Activated CD4-positive, alpha-beta T cell treated with anti-CD3 and anti-CD28 coated beads for 36 hours (primary cell): ENCODE measurements at regions of chr2 and their contacts with region 1.

Region 1: DNA sequence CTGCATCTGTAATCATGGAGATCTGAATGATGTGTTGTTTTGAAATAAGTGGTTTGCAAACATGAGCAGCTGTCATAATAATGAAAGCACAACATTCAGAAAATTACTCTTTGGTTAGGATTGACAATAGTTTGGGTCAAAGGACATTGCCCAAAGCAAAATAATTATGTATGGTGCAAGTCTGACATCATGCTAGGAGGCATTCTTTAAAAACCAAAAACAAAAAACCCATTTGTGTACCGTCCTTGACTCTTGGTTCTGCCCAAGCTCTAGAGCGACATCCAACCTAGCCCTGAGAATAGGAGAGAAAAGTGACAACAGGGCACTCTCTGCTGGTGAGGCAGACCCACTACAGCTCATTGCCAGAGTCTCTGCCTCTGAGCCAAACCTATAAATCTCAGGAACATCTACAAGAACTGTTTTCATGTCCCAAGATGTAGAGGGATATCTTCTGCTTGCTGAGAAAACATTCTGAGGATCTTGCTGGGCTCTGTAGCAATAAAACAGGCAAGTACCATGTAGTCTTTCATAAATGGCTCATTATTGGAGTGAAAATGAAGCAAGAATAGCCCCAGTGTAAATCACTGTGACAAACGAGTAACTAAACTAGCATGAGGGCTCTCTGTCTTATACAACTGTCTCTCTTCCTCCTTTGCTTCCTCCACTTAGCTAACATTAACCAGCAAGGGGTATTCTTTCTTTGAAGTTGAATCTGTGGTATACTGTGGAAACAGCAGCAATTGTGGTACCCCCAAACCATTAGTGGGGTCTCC is 266.8 kb upstream of the CXCR4 start:
- DNase-seq: peak; percentile 68
- ATAC-seq: peak; percentile 40
- H3K4me3 Mint-ChIP-seq: no peak overlapping the region
- H3K27ac Mint-ChIP-seq: peak overlapping the region; percentile 67
- H3K4me1 Mint-ChIP-seq: peaks cover 42% of the 10 kb centered on the region
- H3K27me3 Mint-ChIP-seq: no peaks in the 10 kb centered on the region

Region 2: GRCh38 chr2:135052042-135052876 is 1332.5 kb before region 1 on chr2 and contains the start of gene RAB3GAP1:
- CTCF ChIA-PET with region 1: no interaction called
- POLR2A ChIA-PET with region 1: no interaction called
- intact Hi-C with region 1: loop called in 1 of 2 experiments (anchors 2 kb)
- DNase-seq: peak; percentile 96
- ATAC-seq: peak; percentile 79
- H3K4me3 Mint-ChIP-seq: peak within 1 kb of the TSS; percentile 92
- H3K27ac Mint-ChIP-seq: peak within 1 kb of the TSS; percentile 100
- H3K4me1 Mint-ChIP-seq: peaks cover 40% of the 10 kb centered on the region
- H3K27me3 Mint-ChIP-seq: no peaks in the 10 kb centered on the region
- total RNA-seq, gene RAB3GAP1: 34.5 to 39.8 TPM

Region 3: DNA sequence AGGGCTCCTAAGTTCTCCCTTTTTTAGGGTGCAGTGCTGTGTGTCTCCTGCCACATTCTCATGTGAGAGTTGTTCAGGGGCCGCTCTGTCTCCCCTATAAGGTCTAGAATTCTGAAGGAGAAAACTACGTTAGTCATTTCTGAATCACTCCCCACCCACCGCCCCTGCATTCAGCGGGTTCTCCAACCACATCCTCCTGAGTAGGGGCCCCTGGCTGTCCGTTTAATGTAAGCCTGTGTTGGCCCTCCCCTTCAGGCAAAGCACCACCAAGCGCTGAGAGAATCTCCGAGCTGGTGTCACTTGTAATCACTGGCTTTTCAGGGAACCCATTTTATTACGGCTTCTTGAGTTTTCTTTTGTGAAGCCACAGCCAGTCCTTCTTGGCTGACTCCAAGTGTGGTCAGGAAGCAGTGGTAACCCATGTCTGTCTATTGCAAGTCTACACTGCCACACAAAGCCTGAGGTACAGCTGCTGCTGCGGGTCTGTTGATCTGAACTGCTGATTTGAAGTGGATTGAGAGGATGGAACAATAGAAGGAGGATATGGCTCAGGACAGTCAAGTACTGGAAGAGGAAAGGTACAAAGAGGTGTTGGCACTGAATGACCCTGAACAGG is 564.6 kb before region 1 on chr2:
- CTCF ChIA-PET with region 1: interaction called, 3 read pairs
- POLR2A ChIA-PET with region 1: no interaction called
- intact Hi-C with region 1: loop called (anchors 1 to 2 kb)
- DNase-seq: peak; percentile 94
- ATAC-seq: peak; percentile 93
- H3K4me3 Mint-ChIP-seq: peak overlapping the region; percentile 71
- H3K27ac Mint-ChIP-seq: peak overlapping the region; percentile 87
- H3K4me1 Mint-ChIP-seq: peaks cover 45% of the 10 kb centered on the region
- H3K27me3 Mint-ChIP-seq: no peaks in the 10 kb centered on the region

Region 4: GRCh38 chr2:135948642-135949355 is 435.9 kb before region 1 on chr2:
- CTCF ChIA-PET with region 1: interaction called, 4 read pairs
- POLR2A ChIA-PET with region 1: interaction called, 4 read pairs
- intact Hi-C with region 1: loop called in 1 of 2 experiments (anchors 1 kb)
- DNase-seq: no peak
- ATAC-seq: peak; percentile 81
- H3K4me3 Mint-ChIP-seq: peak overlapping the region; percentile 39
- H3K27ac Mint-ChIP-seq: peak overlapping the region; percentile 84
- H3K4me1 Mint-ChIP-seq: peaks cover 55% of the 10 kb centered on the region
- H3K27me3 Mint-ChIP-seq: no peaks in the 10 kb centered on the region

Region 5: GRCh38 chr2:136075466-136075865 is 309.3 kb before region 1 on chr2:
- CTCF ChIA-PET with region 1: no interaction called
- POLR2A ChIA-PET with region 1: no interaction called
- intact Hi-C with region 1: no loop called
- DNase-seq: no peak
- ATAC-seq: no peak
- H3K4me3 Mint-ChIP-seq: no peak overlapping the region
- H3K27ac Mint-ChIP-seq: no peak overlapping the region
- H3K4me1 Mint-ChIP-seq: peaks cover 3% of the 10 kb centered on the region
- H3K27me3 Mint-ChIP-seq: no peaks in the 10 kb centered on the region

Region 6: GRCh38 chr2:136117909-136118818 is 266.6 kb before region 1 on chr2 and contains the start of gene CXCR4:
- CTCF ChIA-PET with region 1: interaction called, 3 read pairs
- POLR2A ChIA-PET with region 1: interaction called, 14 read pairs
- intact Hi-C with region 1: loop called (anchors 1 kb)
- DNase-seq: peak; percentile 90
- ATAC-seq: peak; percentile 34
- H3K4me3 Mint-ChIP-seq: peak within 1 kb of the TSS; percentile 94
- H3K27ac Mint-ChIP-seq: peak within 1 kb of the TSS; percentile 93
- H3K4me1 Mint-ChIP-seq: peaks cover 60% of the 10 kb centered on the region
- H3K27me3 Mint-ChIP-seq: peaks cover 2% of the 10 kb centered on the region
- total RNA-seq, gene CXCR4: 75.4 to 89.3 TPM

Region 7: GRCh38 chr2:136238286-136239078 is 146.2 kb before region 1 on chr2:
- CTCF ChIA-PET with region 1: interaction called, 10 read pairs
- POLR2A ChIA-PET with region 1: interaction called, 7 read pairs
- intact Hi-C with region 1: loop called (anchors 1 to 2 kb)
- DNase-seq: peak; percentile 44
- ATAC-seq: peak; percentile 82
- H3K4me3 Mint-ChIP-seq: peak overlapping the region; percentile 15
- H3K27ac Mint-ChIP-seq: peak overlapping the region; percentile 93
- H3K4me1 Mint-ChIP-seq: peaks cover 43% of the 10 kb centered on the region
- H3K27me3 Mint-ChIP-seq: no peaks in the 10 kb centered on the region

Region 8: GRCh38 chr2:136362676-136363390 is 21.9 kb before region 1 on chr2:
- CTCF ChIA-PET with region 1: interaction called, 3 read pairs
- POLR2A ChIA-PET with region 1: interaction called, 8 read pairs
- intact Hi-C with region 1: loop called (anchors 1 to 2 kb)
- DNase-seq: peak; percentile 65
- ATAC-seq: peak; percentile 82
- H3K4me3 Mint-ChIP-seq: no peak overlapping the region
- H3K27ac Mint-ChIP-seq: peak overlapping the region; percentile 63
- H3K4me1 Mint-ChIP-seq: peaks cover 54% of the 10 kb centered on the region
- H3K27me3 Mint-ChIP-seq: peaks cover 12% of the 10 kb centered on the region